HEK293 (cell line): ENCODE measurements at regions of chr9 and their contacts with region 1.

Region 1: DNA sequence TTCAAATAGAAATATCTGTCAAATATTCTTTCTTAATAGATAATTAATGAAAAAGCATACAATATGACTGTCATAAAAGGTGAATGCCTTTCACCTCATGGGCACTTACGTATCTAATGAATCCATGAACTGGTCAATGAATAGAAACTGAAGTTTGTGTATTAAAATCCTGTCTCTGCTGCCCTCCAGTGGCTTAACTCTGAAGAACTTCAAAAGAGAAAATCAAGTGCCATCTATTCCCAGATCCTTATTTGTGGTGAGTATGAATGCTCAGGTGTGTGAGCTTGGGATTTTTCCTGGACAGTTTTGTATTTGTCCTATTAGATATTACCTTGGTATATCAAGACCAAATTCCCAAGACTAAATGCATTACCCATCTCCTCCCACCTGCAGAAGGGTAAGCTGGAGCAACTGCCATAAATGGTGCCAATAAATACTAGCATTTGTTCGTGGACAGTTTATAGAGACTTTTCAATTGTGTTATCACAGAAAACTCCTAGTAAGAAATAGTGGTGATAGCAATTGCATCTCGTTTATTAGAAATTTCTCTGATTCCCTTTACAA is 44.0 kb upstream of the SVEP1 start:
- H3K4me3 ChIP-seq: no peak overlapping the region
- H3K27ac ChIP-seq: no peak overlapping the region
- H3K4me1 ChIP-seq: no peaks in the 10 kb centered on the region
- CTCF ChIP-seq: no peak

Region 2: GRCh38 chr9:110183208-110184145 is 440.1 kb before region 1 on chr9:
- CTCF ChIA-PET with region 1: interaction called, 55 read pairs
- POLR2A ChIA-PET with region 1: no interaction called
- H3K4me3 ChIP-seq: no peak overlapping the region
- H3K27ac ChIP-seq: no peak overlapping the region
- H3K4me1 ChIP-seq: no peaks in the 10 kb centered on the region
- CTCF ChIP-seq: no peak

Region 3: GRCh38 chr9:110427497-110428104 is 195.9 kb before region 1 on chr9:
- CTCF ChIA-PET with region 1: interaction called, 10 read pairs
- POLR2A ChIA-PET with region 1: no interaction called
- H3K4me3 ChIP-seq: no peak overlapping the region
- H3K27ac ChIP-seq: no peak overlapping the region
- H3K4me1 ChIP-seq: no peaks in the 10 kb centered on the region
- CTCF ChIP-seq: peak; percentile 16; the same call in 1 of the 2 replicates